ENCODE measurements at regions of chr6 and their contacts with region 1.

Region 1: GRCh38 chr6:33717934-33718455 is 6.5 kb upstream of the UQCC2 start:
- DNase-seq: no peak
- ATAC-seq: no peak
- H3K4me3 ChIP-seq: no peak overlapping the region
- H3K27ac ChIP-seq: peak overlapping the region; percentile 76 to 100 (median 99)
- H3K4me1 ChIP-seq: peaks cover 7 to 8% of the 10 kb centered on the region in 2 donors
- H3K27me3 ChIP-seq: no peaks in the 10 kb centered on the region
- CTCF ChIP-seq: no peak
- POLR2A ChIP-seq: no peak

Region 2: DNA sequence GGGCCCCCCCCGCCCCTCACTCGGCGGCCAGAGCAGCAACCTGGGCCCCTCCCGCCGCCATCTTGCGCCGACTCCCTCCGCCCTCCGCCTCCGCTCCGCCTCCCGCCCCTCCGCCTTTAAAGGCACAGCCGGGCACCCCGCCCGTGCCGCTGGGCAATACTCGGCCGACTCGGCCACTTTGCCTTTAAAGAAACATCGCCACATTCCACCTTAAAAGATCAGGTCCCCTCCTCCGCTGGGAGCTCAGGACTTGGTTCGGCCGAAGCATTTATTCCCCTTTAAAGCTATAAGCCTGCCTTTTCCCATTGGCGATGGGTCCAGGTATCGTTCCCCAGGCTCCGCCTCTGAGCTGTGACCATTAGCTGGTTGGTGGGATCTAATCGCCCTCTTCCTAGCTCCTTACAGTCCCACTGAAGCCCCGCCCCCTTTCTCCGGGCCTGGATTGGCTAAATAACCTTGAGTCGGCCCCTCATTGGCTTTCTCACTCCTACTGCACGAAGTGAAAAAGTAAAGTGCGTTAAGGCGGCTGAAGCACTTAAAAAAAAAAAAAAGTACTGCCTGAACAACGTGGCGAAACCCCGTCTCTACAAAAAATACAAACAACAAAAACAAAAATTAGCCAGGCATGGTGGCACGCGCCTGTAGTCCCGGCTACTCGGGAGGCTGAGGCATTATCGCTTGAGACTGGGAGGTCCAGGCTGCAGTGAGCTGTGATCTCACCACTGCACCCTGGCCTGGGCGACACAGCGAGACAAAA is 400.1 kb before region 1 on chr6 and contains the start of gene ZBTB22:
- in situ Hi-C with region 1: no loop called
- intact Hi-C with region 1: loop called (anchors 10 kb)
- DNase-seq: peak; percentile 99 to 100
- ATAC-seq: peak; percentile 84 to 90
- H3K4me3 ChIP-seq: peak within 1 kb of the TSS; percentile 56 to 70 (median 64)
- H3K27ac ChIP-seq: peak within 1 kb of the TSS; percentile 82 to 93 (median 90)
- H3K4me1 ChIP-seq: peaks cover 36 to 66% of the 10 kb centered on the region in 2 donors
- H3K27me3 ChIP-seq: no peaks in the 10 kb centered on the region
- CTCF ChIP-seq: peak in 1 of 5 experiments; percentile 24
- POLR2A ChIP-seq: peak in 1 of 2 donors; percentile 56
- total RNA-seq, gene ZBTB22: 9.0 to 19.3 (median 16.3) TPM

Region 3: GRCh38 chr6:33751771-33752645 is 34.0 kb after region 1 on chr6:
- in situ Hi-C with region 1: no loop called
- intact Hi-C with region 1: loop called (anchors 1 kb)
- DNase-seq: peak in 1 of 2 donors; percentile 53
- ATAC-seq: no peak
- H3K4me3 ChIP-seq: no peak overlapping the region
- H3K27ac ChIP-seq: peak overlapping the region; percentile 98 to 100 (median 100)
- H3K4me1 ChIP-seq: peaks cover 26 to 34% of the 10 kb centered on the region in 2 donors
- H3K27me3 ChIP-seq: no peaks in the 10 kb centered on the region
- CTCF ChIP-seq: no peak
- POLR2A ChIP-seq: no peak

Region 4: DNA sequence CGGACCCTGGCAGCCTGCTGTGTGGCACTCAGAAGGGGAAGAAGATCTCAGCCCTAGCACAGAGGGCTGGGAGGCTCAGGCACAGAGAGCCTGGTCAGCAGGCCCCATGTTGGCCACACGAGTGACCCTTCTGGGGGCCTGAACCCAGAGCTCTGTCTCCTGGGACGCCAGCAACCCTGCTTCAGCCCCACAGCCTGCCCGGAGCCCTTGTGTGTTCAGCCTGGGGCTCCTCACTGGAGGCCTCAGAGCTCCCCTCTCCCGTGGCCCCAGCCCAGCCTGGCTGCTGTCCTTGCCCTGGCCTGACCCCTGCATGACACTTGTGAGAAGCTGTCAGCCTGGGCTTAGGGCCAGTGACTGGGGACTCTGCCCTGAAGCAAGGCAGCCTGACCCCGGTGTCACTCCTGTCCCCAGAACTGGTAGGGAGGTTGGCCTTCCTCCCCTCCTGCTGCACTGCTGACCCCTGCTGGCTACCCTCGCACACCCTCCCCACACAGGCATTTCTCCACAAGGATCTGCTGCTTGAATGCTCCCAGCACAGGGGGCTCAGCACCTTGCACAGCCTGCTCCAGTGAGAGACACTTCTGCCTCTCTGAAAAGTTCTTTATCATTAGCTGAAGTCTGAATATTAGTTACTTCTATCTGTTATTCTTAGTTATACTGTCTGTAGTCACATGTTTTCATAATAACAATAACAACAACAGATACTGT is 44.1 kb after region 1 on chr6:
- in situ Hi-C with region 1: loop called in 2 of 4 experiments (anchors 5 kb)
- intact Hi-C with region 1: no loop called
- DNase-seq: peak; percentile 84 to 98
- ATAC-seq: peak; percentile 91 to 95
- H3K4me3 ChIP-seq: peak overlapping the region in 3 of 4 donors; percentile 27 to 37 (median 34)
- H3K27ac ChIP-seq: peak overlapping the region; percentile 85 to 93 (median 90)
- H3K4me1 ChIP-seq: peaks cover 24 to 26% of the 10 kb centered on the region in 2 donors
- H3K27me3 ChIP-seq: no peaks in the 10 kb centered on the region
- CTCF ChIP-seq: peak; percentile 73 to 85 (median 85)
- POLR2A ChIP-seq: peak; percentile 31 to 46

Measured in gastrocnemius medialis (tissue), 4 donors.